Dorsolateral prefrontal cortex (tissue), 120 donors: ENCODE measurements at regions of chr5 and their contacts with region 1.

Region 1: DNA sequence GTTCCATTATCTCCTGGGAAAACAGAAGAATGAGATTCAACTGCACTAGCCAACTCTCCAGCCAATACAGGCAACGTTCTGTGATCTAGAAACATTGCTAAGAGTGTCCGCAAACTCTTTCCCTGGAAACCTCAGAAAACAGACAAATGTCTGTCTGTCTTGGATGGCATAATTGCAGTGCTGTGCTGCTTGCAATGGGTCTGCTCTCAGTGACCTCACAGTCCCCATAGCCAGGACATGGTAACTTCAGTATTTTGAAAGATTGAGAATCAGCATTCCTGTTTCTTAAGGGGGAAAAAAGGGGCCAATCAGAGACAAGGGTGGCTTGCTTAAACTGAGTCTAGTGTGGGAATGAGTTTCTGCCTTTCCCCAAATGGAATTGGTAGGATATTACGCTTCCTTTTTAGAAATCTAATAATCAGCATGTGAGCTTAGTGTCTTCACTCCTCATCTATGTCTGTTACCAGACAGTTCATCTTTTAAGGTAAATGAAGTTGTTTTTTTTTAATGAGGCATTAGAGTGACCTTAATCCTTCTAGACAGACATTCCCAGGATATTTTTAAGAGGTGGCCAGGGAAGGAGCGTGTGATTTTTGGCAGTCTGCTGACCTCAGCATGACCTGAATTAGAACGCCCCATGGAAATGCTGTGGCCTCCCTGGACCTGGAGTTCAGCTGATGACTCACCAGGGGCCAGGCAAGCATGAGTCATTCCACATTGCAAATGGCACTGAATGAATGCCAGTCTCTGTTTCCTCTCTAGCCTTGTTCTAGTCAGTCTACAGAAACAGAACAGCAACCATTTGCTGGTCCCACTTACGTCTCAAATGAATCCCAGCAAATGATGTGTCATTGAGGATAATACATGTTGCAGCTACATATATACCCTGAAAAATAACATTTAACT is 210.2 kb upstream of the ACTBL2 start:
- DNase-seq: peak in 9 of 10 donors; percentile 45 to 89 (median 76)
- H3K4me3 ChIP-seq: peak overlapping the region in 11 of 59 donors; percentile 3 to 45 (median 12)
- H3K27ac ChIP-seq: peak overlapping the region; percentile 24 to 92 (median 81)
- H3K27me3 ChIP-seq: no peaks in the 10 kb centered on the region
- CTCF ChIP-seq: peak in 3 of 56 donors; percentile 24 to 43 (median 29)

Region 2: DNA sequence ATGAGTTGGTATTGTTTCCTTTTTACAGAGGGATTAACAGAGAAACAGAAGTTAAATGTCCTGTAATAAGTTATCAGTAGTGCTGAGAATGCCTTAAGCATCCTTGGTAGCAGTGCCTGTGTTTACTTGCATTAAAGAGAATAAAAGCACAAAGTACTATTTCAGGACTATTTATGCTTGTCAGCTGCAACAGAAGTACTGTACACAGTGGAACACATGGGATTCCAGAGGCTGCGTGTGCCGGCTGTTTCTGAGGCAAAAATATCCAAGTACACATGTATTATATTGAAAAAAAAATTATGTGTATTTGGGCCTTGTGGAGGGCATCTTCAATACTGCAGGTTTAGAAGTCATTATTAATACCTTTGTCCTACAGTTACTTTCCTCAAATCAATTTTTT is 152.0 kb before region 1 on chr5:
- intact Hi-C with region 1: loop called in 1 of 2 experiments (anchors 10 kb)
- DNase-seq: peak in 1 of 10 donors; percentile 30
- H3K4me3 ChIP-seq: no peak overlapping the region
- H3K27ac ChIP-seq: peak overlapping the region in 21 of 59 donors; percentile 1 to 55 (median 29)
- H3K27me3 ChIP-seq: no peaks in the 10 kb centered on the region
- CTCF ChIP-seq: no peak

Region 3: DNA sequence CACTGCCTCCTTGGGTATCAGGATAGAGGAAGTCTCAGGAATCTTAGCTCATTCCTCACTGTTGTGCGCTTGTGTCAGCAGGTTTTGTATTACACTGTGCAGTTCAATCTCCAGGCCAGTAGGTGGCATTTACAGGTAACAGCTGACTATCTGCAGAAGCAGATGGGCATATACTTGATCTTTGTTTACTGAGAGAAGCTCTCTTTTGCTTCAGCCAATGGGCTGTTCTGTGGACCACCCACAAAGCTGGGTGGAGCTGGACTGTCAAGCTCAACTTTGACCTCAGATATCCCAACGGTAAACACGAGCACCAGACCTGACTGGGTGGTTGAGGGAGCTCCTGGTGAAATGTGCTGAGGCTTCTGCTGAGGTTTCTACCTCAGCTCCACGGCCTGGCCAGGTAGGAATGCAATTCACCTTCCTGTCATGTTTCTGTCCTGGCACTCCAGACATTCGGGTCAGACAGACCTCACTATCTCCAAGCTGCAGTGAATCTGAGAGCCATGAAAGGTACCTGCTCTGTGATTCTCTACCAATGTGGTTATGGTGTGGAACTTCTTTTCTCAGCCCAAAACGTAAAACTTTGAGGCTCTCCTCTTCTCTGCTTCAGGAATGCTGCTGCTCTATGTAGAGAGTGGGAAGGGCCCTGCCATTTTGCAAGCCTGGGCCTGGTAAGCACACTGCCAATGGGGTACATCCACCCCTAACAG is 42.3 kb before region 1 on chr5:
- intact Hi-C with region 1: loop called in 1 of 2 experiments (anchors 5 kb)
- DNase-seq: no peak
- H3K4me3 ChIP-seq: no peak overlapping the region
- H3K27ac ChIP-seq: no peak overlapping the region
- H3K27me3 ChIP-seq: no peaks in the 10 kb centered on the region
- CTCF ChIP-seq: peak in 51 of 56 donors; percentile 15 to 57 (median 40)

Region 4: GRCh38 chr5:58188262-58188651 is 495.4 kb after region 1 on chr5:
- intact Hi-C with region 1: no loop called
- DNase-seq: no peak
- H3K4me3 ChIP-seq: no peak overlapping the region
- H3K27ac ChIP-seq: no peak overlapping the region
- H3K27me3 ChIP-seq: no peaks in the 10 kb centered on the region
- CTCF ChIP-seq: no peak